HEK293 (cell line): ENCODE measurements at regions of chr15 and their contacts with region 1.

Region 1: GRCh38 chr15:80977627-80978036 is 12.0 kb downstream of the MESD start:
- H3K4me3 ChIP-seq: no peak overlapping the region
- H3K27ac ChIP-seq: no peak overlapping the region
- H3K4me1 ChIP-seq: peaks cover 14% of the 10 kb centered on the region
- CTCF ChIP-seq: peak; percentile 81

Region 2: DNA sequence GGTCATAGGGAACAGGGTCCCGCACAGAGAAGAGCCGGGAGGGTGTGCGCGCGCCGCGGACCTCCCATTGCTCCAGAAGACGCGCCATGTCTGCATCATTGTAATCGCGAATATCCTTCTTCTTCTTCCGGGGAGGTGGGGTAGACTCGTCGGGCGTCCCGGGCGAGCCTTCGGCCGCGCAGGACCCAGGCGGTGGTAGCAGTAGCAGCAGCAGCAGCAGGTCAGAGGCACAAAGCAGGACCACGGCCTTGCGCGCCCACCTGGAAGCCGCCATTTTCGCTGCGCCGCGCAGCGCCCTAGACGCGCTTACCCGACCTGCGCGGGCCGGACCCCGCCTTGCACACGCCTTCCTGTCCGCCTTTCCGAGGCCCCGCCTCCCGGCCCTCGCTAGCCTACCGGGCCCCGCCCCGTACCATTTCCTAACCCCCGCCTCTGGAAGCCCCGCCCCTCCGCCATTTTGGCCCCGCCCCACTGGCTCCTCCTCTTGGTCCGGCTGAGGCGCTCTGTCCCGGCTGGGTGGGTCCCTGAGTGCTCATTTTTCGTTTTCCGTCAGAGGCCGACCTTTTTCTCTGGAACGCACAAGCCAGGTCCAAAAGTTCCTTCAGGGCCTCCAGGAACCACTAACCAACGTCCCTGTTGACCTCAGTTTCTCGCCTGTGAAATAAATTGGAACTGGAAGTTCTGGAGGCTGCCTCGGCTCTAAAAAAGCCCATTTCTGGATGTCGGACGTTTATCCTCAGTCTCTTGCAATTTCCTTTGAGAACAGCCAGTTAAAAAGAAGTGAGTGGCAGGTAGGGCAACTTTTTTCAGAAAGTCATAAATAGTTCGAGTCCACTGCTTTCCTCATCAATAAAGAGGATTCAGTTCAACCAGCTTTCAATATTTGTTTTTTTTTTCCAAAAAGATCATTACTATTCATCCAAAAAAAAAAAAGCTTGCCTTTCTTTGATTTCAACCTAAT is 12.2 kb after region 1 on chr15 and contains the start of gene MESD:
- CTCF ChIA-PET with region 1: interaction called, 17 read pairs
- POLR2A ChIA-PET with region 1: interaction called, 3 read pairs
- H3K4me3 ChIP-seq: peak within 1 kb of the TSS; percentile 95
- H3K27ac ChIP-seq: peak within 1 kb of the TSS; percentile 56
- H3K4me1 ChIP-seq: peaks cover 13% of the 10 kb centered on the region
- CTCF ChIP-seq: peak; percentile 42

Region 3: GRCh38 chr15:81155375-81156218 is 178.0 kb after region 1 on chr15:
- CTCF ChIA-PET with region 1: interaction called, 25 read pairs
- POLR2A ChIA-PET with region 1: no interaction called
- H3K4me3 ChIP-seq: no peak overlapping the region
- H3K27ac ChIP-seq: no peak overlapping the region
- H3K4me1 ChIP-seq: no peaks in the 10 kb centered on the region
- CTCF ChIP-seq: peak; percentile 27; the same call in 1 of the 2 replicates

Region 4: DNA sequence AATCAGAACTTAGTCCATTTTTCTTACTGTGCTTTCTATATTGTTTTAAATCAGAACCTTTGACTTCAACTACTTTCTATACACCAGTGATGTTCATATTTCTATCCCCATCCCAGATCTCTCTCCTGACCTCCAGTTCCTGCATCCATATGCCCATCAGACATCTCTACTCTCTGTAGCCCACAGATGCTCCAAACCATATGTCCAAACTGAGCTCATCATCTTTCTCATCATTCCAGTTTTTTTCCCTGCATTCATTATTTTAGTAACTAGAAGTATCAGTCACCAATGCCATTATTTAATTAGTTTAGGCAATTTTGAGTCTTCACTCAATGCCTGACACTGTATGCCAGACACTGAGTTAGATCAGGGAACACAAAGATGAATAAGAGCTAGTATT is 193.7 kb after region 1 on chr15:
- CTCF ChIA-PET with region 1: no interaction called
- POLR2A ChIA-PET with region 1: no interaction called
- H3K4me3 ChIP-seq: no peak overlapping the region
- H3K27ac ChIP-seq: no peak overlapping the region
- H3K4me1 ChIP-seq: no peaks in the 10 kb centered on the region
- CTCF ChIP-seq: no peak

Region 5: GRCh38 chr15:81256916-81257315 is 279.3 kb after region 1 on chr15:
- CTCF ChIA-PET with region 1: interaction called, 16 read pairs
- POLR2A ChIA-PET with region 1: no interaction called
- H3K4me3 ChIP-seq: no peak overlapping the region
- H3K27ac ChIP-seq: no peak overlapping the region
- H3K4me1 ChIP-seq: no peaks in the 10 kb centered on the region
- CTCF ChIP-seq: no peak; the same call in 1 of the 2 replicates